Left ventricle myocardium superior (tissue), 1 donor: ENCODE measurements at regions of chr5 and their contacts with region 1.

Region 1: GRCh38 chr5:169302491-169303118 is 1.7 kb upstream of the SLIT3 start:
- DNase-seq: peak; percentile 79
- ATAC-seq: peak; percentile 54

Region 2: DNA sequence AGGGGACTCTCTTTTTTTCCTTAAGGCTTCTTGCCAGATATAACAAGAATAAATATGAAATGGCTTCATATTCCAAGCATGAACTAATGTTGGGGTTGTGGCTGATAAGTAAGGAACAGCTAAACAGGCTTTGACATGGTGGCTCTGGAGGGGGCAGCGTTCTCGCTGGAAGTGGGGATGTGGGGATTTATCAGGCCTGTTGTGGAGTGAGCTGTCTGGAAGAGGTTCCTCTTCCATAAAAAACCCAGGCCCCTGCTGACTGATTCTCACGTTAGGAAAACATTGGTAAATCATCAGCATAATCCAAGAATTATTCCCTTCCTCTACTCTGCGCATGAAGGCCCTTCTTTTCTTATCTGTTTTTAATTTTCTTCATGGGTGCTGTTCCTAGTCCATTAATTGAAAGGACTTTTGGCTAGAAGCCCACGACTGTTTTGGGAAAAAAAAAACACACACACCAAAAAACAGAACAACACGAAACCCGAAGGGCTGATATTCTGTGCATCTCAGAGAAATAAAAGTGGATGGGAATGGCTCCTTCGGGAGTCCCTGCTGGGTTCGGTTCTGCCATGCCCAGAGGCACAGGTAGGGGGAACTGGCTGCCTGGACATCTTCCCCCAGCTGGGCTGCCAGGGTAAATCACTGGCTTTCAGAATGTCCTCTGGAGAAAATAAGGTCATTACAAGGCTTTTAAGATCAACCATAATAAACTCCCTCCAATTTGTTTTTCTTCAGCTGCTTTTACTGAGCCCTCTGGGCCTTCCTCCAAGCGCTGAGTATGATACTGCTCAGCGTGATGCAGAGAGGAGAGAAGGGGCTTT is 298.7 kb before region 1 on chr5:
- intact Hi-C with region 1: loop called (anchors 10 kb)
- DNase-seq: no peak
- ATAC-seq: peak; percentile 65

Region 3: DNA sequence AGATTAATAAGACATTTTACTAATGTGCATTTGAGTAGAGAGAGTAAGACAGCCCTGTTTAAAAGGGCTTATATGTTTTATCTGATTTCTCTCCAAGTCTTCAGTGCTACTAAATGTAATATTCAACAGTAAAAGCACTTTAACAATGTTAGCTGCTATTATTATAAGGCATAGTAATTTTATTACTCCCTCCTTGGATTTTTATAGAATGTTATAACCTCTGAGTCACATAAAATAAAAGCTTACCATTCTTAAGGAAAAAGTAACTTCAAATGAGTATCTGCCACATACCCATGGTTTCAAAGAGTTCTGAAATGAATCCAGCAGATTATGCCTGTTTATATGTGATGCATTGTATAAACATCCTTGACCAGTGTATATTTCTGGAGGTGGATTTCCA is 299.9 kb after region 1 on chr5:
- intact Hi-C with region 1: no loop called
- DNase-seq: no peak
- ATAC-seq: no peak